ENCODE measurements at regions of chr3 and their contacts with region 1.

Region 1: DNA sequence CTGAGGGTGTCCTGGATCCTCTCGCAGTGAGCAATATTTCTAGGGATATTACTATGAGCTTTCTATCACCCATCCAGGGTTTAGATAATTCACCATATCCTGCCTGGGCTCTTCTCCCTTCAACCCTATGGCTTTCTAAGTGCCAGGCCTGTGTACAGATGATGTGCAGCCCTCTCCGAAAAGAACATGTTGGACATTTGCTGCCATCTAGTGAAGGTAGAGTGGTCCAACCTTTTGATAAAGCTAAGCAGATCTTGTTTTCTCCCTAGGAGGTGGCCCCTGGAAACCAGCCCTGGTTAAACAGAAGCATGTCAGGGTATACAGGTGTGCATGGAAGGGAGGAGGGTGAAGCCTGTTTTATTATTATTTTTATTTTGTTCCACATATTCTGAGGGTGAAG is 27.9 kb upstream of the SCN10A start:
- DNase-seq: no peak
- ATAC-seq: peak; percentile 91

Region 2: DNA sequence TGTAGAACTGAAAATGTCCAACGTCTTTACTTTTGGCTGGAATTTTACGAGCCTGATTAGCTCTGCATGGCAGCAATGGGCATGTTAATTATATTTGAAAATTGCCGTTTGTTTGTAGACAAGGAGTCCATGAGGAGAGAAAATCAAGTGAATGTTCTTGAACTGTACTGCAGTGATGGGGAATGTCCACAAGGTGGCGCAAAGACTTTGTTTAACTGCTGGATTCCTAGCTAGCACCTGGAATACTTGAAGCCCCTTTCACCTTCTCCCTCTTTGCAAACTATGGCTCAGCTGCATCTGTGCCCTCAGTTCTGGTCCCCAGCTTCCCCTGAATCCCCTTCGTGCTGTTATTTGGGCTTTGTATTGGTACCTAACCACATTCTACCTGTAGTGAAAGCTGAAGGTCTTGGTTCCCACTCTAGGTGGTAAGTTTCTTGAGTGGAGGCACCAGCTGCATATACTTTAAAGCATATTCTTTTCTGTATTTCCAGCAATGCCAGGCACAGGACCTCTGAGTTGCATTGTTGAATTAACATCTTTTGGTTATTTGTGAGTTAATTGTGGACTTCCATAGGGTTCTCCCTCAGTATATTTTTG is 322.4 kb before region 1 on chr3:
- intact Hi-C with region 1: loop called (anchors 10 kb)
- DNase-seq: peak; percentile 51
- ATAC-seq: peak; percentile 78

Region 3: GRCh38 chr3:38689774-38690173 is 154.1 kb before region 1 on chr3:
- intact Hi-C with region 1: loop called (anchors 10 kb)
- DNase-seq: no peak
- ATAC-seq: peak; percentile 64

Region 4: GRCh38 chr3:38738630-38739395 is 105.1 kb before region 1 on chr3:
- intact Hi-C with region 1: loop called (anchors 10 kb)
- DNase-seq: no peak
- ATAC-seq: peak; percentile 43